Left cardiac atrium (tissue), 4 donors: ENCODE measurements at regions of chr20 and their contacts with region 1.

Region 1: GRCh38 chr20:58246346-58246745 is 17.9 kb upstream of the ANKRD60 start:
- DNase-seq: no peak
- ATAC-seq: no peak

Region 2: DNA sequence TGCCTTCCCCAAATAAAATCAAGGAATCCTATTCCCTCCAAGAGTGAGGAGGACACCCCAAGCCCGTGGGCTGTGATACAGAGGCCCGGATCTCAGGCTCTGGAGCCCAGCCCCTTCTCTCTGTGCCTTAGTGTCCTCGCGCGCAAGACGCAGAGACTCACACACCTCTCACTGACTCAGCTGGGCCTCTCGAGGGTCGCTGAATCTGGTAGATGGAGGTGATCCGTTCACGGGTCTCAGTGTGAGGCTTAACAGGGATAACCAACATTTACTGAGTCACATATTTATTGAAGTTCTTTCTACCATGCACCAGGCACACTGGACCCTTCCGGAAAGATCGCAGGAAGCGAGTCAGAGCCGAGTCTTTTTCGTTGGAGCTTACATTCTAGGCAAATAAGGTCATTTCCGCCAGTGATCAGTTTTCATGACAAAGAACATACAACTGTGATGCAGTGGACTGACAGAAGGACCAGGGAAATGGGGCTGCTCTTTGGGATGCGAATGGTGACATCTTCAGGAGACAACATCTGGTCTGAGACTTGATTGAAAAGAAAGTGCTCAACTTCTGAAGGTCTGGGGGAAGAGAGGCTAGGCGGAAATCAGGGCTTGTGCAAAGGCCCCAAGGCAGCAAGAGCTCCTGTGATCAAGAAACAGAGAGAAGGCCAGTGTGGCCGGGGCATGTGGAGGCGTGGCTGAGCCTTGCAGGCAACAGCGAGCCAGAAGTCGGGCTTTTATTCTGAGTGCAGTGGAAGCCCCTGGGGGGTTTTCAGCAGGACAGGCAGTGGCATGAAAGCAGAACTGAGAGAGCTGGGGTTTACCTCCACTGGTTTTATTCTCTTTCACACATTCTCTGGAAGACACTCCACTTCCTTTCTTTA is 212.1 kb after region 1 on chr20:
- intact Hi-C with region 1: loop called in 1 of 2 experiments (anchors 10 kb)
- DNase-seq: no peak
- ATAC-seq: no peak